ENCODE measurements at regions of chr11 and their contacts with region 1.

Region 1: DNA sequence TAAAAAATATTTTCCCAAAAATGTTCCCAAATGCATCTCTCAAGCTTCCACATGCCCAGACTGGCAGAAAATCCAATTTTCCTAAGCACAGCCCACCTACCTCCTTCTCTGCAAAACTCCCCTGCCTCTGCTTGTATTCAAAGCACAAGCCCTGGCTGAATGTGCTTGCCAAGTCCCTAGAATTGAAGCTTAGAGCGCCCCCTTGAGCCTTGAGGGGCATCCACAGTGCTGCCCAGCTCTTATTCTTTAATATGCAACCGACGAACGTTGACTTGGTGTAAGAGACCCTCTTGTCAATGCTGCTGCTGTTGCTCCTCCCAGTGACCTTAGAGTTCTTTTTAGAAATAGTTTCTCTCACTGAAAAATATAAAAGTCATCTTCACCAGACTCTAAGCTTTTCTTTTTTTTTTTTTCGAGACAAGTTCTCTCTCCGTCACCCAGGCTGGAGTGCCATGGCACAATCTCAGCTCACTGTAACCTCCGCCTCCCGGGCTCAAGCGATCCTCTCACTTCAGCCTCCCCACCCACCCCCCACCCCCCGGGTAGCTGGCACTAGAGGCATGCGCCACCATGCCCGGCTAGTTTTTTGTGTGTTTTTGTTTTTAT is 63.5 kb upstream of the CAPRIN1 start:
- DNase-seq: no peak
- H3K4me3 ChIP-seq: no peak overlapping the region
- H3K27me3 ChIP-seq: no peaks in the 10 kb centered on the region
- CTCF ChIP-seq: peak; percentile 90

Region 2: GRCh38 chr11:33835143-33835878 is 152.8 kb before region 1 on chr11:
- CTCF ChIA-PET with region 1: interaction called, 18 read pairs
- POLR2A ChIA-PET with region 1: no interaction called
- DNase-seq: peak; percentile 48
- H3K4me3 ChIP-seq: no peak overlapping the region
- H3K27me3 ChIP-seq: peaks cover 11% of the 10 kb centered on the region
- CTCF ChIP-seq: peak; percentile 33; the same call in 1 of the 2 replicates

Region 3: DNA sequence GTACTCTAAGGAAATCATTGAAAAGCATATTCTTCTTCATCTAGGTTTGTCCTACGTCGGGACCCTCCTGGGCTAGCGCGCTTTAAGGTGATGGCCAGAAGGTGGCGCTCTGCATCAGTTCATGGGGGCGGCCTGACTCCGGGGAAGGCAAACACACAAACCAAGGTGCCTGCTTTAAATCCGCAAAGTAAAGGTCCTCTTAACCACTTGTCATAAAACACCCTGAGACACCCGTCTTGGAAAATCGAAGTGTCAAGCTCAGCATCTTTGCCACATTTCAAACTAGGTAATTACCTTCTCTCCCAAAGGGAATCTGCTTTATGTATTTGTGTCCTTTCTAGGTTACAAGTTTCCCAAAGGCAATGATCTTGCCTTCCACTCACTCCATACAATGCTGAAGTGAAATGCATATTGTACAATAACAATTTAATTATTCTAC is 130.1 kb before region 1 on chr11:
- CTCF ChIA-PET with region 1: interaction called, 43 read pairs
- POLR2A ChIA-PET with region 1: no interaction called
- DNase-seq: peak; percentile 1
- H3K4me3 ChIP-seq: no peak overlapping the region
- H3K27me3 ChIP-seq: peaks cover 21% of the 10 kb centered on the region
- CTCF ChIP-seq: peak; percentile 93

Region 4: DNA sequence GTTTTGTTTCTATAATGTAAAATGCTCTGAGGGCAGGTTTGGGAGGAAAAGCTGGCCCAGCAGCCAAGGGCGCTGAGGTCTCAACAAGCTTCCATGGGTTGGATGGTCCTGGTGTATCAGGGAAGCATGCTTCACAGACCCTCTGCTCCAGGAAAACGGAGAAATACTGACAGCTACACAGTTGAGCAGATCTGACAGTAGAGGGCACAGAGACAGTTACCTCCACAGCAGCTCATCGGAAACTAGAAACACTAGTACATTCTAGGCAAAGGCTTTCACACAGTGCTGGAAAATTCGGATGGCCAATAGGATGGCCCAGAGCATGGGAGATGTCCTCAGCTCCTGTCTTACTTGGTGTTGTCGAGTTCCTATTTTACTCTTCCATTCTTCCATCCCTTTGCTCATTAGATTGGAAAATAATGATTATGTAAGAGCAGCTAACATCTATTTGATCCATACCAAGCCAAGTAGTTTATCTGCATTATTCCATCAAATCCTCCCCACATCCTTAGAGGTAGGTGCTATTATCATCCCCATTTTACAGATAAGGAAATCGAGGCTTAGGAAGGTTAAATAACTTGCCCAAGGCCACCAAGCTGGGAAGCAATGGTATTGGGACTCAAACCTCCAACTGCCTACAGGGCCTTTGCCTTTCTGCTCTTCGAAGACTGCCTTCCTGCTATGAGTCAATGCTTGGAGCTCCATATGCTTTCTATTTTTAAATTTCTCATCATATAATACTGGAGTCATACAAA is 124.5 kb before region 1 on chr11:
- CTCF ChIA-PET with region 1: interaction called, 43 read pairs
- POLR2A ChIA-PET with region 1: no interaction called
- DNase-seq: no peak
- H3K4me3 ChIP-seq: no peak overlapping the region
- H3K27me3 ChIP-seq: peaks cover 40% of the 10 kb centered on the region
- CTCF ChIP-seq: no peak

Region 5: GRCh38 chr11:33970984-33971466 is 17.1 kb before region 1 on chr11:
- CTCF ChIA-PET with region 1: interaction called, 42 read pairs
- POLR2A ChIA-PET with region 1: no interaction called
- DNase-seq: no peak
- H3K4me3 ChIP-seq: no peak overlapping the region
- H3K27me3 ChIP-seq: peaks cover 4% of the 10 kb centered on the region; the same call in 1 of the 2 replicates
- CTCF ChIP-seq: peak; percentile 65

Region 6: DNA sequence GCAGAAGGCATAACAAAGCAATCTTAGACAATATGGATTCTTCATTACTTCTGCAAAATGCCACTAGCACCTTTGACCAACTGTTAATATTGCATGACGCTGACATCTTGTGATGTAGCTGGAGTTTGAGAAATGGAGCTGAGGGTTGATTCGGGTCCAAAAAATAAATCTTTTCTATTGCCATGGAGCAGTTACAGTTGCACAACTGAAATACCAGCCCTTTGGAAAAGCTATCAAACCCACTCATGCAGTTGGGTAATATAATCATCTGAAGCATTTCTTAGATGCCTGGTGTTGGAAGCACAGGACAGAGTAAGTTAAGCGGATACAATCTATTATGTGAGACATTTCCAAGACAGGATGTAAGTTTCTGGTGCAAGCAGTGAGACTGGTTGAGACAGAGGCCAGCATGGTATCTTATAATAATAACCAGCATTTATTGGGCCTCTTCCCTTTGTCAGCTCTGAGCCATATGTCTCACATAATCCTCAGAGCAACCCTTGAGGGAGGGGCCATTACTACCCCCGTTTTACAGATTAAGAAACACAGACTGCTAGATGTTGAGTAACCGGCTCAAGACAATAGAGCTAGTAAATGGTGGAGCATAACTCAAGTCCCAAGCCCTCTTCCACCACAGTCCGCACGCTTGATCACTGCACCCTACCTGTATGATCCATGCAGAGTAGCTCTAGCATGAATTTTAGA is 11.4 kb before region 1 on chr11:
- CTCF ChIA-PET with region 1: interaction called, 42 read pairs
- POLR2A ChIA-PET with region 1: no interaction called
- DNase-seq: no peak
- H3K4me3 ChIP-seq: no peak overlapping the region
- H3K27me3 ChIP-seq: peaks cover 6% of the 10 kb centered on the region; the same call in 1 of the 2 replicates
- CTCF ChIP-seq: no peak

Region 7: DNA sequence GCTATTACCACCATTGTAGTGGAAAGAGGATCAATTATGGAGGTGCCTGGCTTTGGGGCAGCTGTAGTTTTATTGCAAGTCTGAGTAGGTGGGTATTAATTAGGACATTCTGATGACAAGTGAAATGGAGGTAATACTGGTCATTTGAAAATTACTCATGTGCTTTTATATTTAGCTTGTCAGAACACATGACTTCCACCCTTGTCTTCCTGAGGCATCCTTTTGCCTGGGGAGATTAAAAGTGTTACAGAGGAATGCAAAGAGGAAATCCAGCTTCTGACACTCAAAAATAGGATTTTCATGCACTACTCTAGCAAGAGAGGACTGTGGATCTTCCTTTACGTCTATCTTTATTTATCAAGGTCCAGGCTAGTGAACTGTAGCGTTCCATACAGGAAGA is 18.8 kb after region 1 on chr11:
- CTCF ChIA-PET with region 1: interaction called, 12 read pairs
- POLR2A ChIA-PET with region 1: no interaction called
- DNase-seq: no peak
- H3K4me3 ChIP-seq: no peak overlapping the region
- H3K27me3 ChIP-seq: peaks cover 7% of the 10 kb centered on the region
- CTCF ChIP-seq: no peak

Measured in BJ (cell line).